PC-9 (cell line): ENCODE measurements at regions of chr4 and their contacts with region 1.

Region 1: GRCh38 chr4:76305971-76306881 is at the start of gene STBD1:
- DNase-seq: peak; percentile 54 to 73
- H3K4me3 ChIP-seq: peak within 1 kb of the TSS; percentile 87
- H3K27ac ChIP-seq: peak within 1 kb of the TSS; percentile 58
- H3K4me1 ChIP-seq: peaks cover 20% of the 10 kb centered on the region
- H3K27me3 ChIP-seq: no peaks in the 10 kb centered on the region
- CTCF ChIP-seq: no peak
- total RNA-seq, gene STBD1: 1.8 and 3.5 TPM in 2 replicates

Region 2: DNA sequence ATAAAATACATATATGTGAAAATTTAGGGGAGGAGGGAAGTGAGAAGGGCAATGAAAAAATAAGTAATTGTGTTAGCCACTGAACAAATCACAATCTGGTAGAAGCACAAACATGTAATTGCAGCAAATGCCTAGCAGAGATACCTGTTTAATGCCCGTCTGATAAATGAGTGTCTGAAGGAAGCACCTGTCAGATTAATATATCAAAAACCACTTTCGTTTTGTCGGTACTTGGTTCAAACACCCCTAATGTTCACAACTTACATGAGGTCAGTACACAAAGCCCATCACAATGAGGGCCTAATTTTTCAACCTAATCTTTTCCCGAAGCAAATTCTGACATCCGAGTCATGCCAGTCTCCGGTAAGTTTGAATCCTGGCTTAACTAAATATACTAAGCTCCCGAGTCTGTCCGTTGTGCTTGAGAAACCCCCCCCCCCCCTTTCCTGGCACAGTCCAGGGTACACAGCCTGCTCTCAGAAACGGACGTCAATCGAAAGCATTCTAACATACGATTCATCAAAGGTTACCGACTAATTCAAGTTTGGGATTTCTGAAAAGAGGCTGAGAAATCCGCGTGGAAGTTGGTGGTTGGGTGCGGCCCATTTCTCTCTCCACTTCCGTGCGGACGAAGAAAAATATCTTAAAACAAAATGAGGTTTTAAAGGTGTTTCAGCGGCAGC is 316.2 kb before region 1 on chr4:
- CTCF ChIA-PET with region 1: no interaction called
- POLR2A ChIA-PET with region 1: no interaction called
- intact Hi-C with region 1: no loop called
- DNase-seq: no peak
- H3K4me3 ChIP-seq: peak overlapping the region; percentile 92
- H3K27ac ChIP-seq: no peak overlapping the region
- H3K4me1 ChIP-seq: peaks cover 16% of the 10 kb centered on the region
- H3K27me3 ChIP-seq: no peaks in the 10 kb centered on the region
- CTCF ChIP-seq: no peak

Region 3: DNA sequence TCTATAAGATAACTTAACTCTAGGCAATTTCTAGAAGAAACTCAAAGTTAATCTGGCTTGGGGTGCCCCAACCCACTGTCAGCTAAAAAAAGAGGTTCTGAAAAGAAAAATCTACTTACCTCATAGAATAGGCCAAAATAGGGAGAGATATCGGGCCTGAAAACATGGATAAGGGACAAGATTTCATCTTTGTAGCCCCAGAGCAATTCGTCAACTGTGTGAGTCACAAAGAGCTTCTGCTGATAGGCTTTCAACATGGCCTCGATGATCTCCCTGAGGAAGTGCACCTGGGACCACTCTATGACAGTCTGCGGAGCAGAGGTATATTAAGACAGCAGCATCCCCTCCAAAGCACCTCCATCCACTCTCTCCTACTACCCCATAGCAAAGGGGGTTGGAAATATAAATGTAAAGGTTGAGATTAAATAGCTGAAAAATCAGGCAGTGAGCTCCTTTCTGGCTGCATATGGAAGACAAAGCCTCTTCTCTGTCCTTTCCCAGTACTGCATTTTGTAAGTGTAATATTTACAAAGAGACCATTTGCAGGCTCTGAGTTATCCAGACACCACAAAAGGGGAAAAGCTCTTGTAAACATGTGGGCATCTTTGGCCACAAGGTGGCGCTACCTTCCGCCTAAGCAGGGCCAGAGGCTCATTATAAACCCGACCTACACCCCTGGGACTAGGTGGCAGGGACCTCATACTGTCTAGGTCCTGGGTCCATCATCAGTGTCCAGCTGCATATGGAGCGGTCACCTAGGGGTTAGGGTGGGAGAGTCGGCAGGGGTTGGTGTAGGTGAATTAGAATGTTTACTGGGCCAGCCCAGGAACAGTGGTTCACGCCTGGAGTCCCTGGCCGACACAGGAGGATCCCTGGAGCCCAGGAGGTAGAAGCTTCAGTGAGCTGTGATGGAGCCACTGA is 126.6 kb before region 1 on chr4:
- CTCF ChIA-PET with region 1: no interaction called
- POLR2A ChIA-PET with region 1: no interaction called
- intact Hi-C with region 1: loop called (anchors 5 kb)
- DNase-seq: peak in 1 of 2 experiments; percentile 64
- H3K4me3 ChIP-seq: no peak overlapping the region
- H3K27ac ChIP-seq: no peak overlapping the region
- H3K4me1 ChIP-seq: no peaks in the 10 kb centered on the region
- H3K27me3 ChIP-seq: no peaks in the 10 kb centered on the region
- CTCF ChIP-seq: peak; percentile 87

Region 4: DNA sequence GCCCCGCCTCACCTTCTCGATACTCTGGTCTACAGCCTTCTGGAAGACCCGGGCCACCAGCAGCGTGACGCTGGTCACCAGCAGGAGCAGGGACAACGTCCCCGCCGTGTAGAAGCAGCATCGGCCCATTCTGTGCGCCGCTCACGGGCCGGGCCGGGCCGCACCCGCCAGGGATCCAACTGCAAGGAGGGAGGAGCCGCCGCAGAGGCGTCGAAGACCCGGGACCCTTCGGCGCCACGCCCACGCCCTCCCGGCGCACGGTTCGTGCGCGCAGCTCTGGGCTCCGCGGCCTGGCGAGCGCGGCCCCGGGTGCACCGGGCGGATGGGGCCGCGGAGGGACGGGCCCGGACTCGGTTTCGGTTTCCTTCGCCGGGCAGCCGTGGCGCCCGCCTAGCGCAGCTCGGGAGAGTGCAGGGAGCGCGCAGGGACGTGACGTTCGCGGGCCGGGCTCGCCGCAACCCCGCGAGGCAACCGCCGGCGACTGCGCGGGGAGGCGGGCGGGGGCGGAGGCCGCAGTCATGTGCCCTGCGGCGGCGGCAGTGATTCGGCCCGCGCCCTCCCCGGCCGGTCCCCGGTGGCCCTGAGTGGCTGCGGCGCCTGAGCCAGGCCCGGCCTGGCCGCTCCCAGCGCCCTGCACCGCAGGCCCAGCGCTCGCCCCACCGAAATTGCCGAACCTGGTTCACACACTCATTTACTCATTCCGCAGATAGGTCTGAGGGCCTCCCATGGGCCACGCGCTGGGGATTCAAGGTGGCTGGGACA is 92.6 kb before region 1 on chr4 and contains the start of gene SCARB2:
- CTCF ChIA-PET with region 1: no interaction called
- POLR2A ChIA-PET with region 1: no interaction called
- intact Hi-C with region 1: loop called (anchors 2 kb)
- DNase-seq: peak; percentile 58 to 84
- H3K4me3 ChIP-seq: peak within 1 kb of the TSS; percentile 81
- H3K27ac ChIP-seq: peak within 1 kb of the TSS; percentile 89
- H3K4me1 ChIP-seq: peaks cover 49% of the 10 kb centered on the region
- H3K27me3 ChIP-seq: no peaks in the 10 kb centered on the region
- CTCF ChIP-seq: no peak
- total RNA-seq, gene SCARB2: 37.6 and 64.7 TPM in 2 replicates

Region 5: GRCh38 chr4:76499461-76499860 is 193.2 kb after region 1 on chr4:
- CTCF ChIA-PET with region 1: no interaction called
- POLR2A ChIA-PET with region 1: no interaction called
- intact Hi-C with region 1: no loop called
- DNase-seq: no peak
- H3K4me3 ChIP-seq: no peak overlapping the region
- H3K27ac ChIP-seq: no peak overlapping the region
- H3K4me1 ChIP-seq: no peaks in the 10 kb centered on the region
- H3K27me3 ChIP-seq: no peaks in the 10 kb centered on the region
- CTCF ChIP-seq: no peak